Endothelial cell of umbilical vein (primary cell): ENCODE measurements at regions of chr15 and their contacts with region 1.

Region 1: DNA sequence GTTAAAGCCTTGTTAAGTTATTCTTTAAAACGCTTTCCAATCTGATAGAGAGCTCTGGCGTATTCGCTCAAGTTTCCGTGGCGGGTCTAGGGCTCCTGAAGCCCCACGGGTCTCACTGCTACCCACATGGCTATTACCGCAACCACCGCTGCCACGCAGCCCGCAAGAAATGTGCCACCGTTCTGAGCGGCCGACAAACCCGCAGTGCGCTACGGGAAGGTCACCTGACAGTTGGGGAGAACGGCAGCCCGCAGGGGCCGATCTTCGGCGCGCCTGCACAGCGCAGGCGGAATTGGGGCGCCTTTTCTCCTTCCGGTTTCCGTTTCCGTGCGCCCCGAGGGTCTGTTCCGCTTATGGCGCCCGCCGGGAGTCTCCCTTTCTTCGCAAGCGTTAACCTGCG is 76.6 kb upstream of the SNRPN start:
- DNase-seq: peak; percentile 33
- H3K4me3 ChIP-seq: peak overlapping the region; percentile 9 to 53 (median 41)
- H3K27ac ChIP-seq: no peak overlapping the region
- H3K4me1 ChIP-seq: no peaks in the 10 kb centered on the region
- H3K27me3 ChIP-seq: no peaks in the 10 kb centered on the region
- CTCF ChIP-seq: no peak
- POLR2A ChIP-seq: no peak

Region 2: DNA sequence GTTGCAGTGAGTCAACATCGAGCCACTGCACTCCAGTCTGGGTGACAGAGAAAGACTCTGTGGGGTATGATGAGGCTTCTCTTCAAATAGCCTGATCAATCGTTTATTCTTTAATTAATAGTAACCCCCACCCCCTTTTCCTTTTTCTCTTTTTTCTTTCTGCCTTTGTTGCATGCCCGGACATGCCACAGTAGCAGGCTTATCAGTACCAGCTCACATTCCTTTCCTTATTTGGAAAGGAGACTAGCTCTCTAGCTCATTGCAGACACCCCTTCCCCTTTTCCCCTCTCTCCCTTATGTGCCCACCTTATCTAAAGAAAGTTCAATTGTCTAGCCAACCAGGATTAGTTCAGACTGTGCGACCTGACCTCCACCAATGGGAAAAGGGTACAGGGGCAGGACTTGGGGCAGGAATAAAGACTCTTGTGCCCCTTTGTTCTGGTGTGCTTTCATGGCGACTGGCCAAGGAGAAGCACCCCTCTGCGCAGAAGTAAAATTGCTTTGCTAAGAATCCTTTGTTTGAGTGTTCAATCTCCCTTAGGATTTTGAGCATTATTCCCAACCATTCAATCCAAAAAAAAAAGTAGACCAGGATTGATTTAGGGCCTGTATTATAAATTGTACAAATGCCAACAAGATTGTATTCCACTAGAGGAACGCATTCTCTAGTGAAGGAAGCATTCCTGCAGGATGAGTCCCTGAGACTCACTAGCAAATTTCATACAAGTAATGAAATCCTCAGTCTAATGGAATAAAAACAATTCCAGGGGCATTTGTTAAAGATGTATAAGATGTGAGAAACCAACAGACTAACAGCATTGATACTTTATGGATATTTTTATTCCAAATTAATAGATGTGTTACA is 19.2 kb before region 1 on chr15:
- CTCF ChIA-PET with region 1: no interaction called
- POLR2A ChIA-PET with region 1: no interaction called
- dilution Hi-C with region 1: no loop called
- intact Hi-C with region 1: loop called (anchors 1 kb)
- DNase-seq: peak; percentile 53
- H3K4me3 ChIP-seq: peak overlapping the region in 1 of 3 experiments; percentile 5
- H3K27ac ChIP-seq: peak overlapping the region; percentile 69
- H3K4me1 ChIP-seq: peaks cover 8% of the 10 kb centered on the region
- H3K27me3 ChIP-seq: no peaks in the 10 kb centered on the region
- CTCF ChIP-seq: no peak
- POLR2A ChIP-seq: no peak